ENCODE measurements at regions of chr22 and their contacts with region 1.

Region 1: GRCh38 chr22:17084554-17085276 is at the start of gene IL17RA:
- DNase-seq: peak; percentile 95
- H3K4me3 Mint-ChIP-seq: peak within 1 kb of the TSS; percentile 84
- H3K27ac Mint-ChIP-seq: peak within 1 kb of the TSS; percentile 85
- H3K4me1 Mint-ChIP-seq: peaks cover 42% of the 10 kb centered on the region
- H3K27me3 Mint-ChIP-seq: no peaks in the 10 kb centered on the region
- total RNA-seq, gene IL17RA: 10.2 to 10.7 TPM

Region 2: GRCh38 chr22:17098379-17098819 is 13.7 kb after region 1 on chr22:
- CTCF ChIA-PET with region 1: interaction called, 5 read pairs
- intact Hi-C with region 1: loop called (anchors 2 kb)
- DNase-seq: peak; percentile 60
- H3K4me3 Mint-ChIP-seq: no peak overlapping the region
- H3K27ac Mint-ChIP-seq: no peak overlapping the region
- H3K4me1 Mint-ChIP-seq: peaks cover 86% of the 10 kb centered on the region
- H3K27me3 Mint-ChIP-seq: no peaks in the 10 kb centered on the region

Region 3: DNA sequence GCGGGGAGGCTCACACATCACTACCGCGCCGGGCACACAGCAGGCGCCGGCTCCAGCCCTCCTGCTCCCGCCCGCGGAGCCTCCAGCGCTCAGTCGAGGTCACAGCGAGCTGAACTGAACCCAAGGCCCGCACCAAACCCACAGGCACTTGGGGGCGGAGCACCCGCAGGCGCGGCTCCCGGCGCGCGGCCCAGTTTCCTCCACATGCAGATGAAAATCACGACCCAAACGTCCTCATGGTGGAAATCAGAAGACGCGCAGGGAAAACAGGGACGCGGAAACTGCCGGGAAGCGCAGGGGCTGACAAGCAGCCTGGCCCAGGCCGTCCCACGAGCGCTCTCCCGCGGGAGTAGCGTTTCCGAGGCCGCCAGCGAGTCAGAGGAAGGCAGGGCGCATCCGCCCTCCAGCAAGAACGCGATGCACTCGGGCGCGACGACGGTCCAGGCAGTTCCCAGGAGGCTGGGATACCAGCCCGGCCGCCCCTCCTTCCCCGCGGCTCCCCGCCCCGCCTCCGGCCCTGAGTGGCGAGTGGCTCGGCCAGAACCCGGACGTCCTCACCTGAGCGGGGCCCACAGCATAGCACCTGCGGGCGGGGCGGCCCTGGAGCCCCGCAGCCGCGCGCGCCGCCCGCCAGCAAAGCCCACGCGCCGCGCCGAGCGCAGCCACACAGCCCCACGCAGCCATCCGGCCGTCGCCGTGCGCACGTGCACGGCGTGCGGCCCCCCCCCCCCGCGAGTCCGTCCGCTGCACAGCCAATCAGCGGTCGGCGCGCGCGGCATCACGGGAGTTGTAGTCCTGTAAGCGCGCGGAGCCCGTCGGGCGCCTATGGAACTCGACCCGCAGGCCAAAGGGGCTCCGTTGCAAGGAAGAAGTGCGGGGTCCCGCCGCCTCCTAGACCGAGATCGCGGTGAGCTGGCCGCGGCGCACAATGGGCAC is 74.1 kb after region 1 on chr22 and contains the start of gene HDHD5:
- CTCF ChIA-PET with region 1: interaction called, 4 read pairs
- intact Hi-C with region 1: loop called (anchors 1 kb)
- DNase-seq: peak; percentile 90
- H3K4me3 Mint-ChIP-seq: peak within 1 kb of the TSS; percentile 84
- H3K27ac Mint-ChIP-seq: peak within 1 kb of the TSS; percentile 78
- H3K4me1 Mint-ChIP-seq: peaks cover 38% of the 10 kb centered on the region
- H3K27me3 Mint-ChIP-seq: no peaks in the 10 kb centered on the region
- total RNA-seq, gene HDHD5: 40.1 to 43.7 TPM

Region 4: DNA sequence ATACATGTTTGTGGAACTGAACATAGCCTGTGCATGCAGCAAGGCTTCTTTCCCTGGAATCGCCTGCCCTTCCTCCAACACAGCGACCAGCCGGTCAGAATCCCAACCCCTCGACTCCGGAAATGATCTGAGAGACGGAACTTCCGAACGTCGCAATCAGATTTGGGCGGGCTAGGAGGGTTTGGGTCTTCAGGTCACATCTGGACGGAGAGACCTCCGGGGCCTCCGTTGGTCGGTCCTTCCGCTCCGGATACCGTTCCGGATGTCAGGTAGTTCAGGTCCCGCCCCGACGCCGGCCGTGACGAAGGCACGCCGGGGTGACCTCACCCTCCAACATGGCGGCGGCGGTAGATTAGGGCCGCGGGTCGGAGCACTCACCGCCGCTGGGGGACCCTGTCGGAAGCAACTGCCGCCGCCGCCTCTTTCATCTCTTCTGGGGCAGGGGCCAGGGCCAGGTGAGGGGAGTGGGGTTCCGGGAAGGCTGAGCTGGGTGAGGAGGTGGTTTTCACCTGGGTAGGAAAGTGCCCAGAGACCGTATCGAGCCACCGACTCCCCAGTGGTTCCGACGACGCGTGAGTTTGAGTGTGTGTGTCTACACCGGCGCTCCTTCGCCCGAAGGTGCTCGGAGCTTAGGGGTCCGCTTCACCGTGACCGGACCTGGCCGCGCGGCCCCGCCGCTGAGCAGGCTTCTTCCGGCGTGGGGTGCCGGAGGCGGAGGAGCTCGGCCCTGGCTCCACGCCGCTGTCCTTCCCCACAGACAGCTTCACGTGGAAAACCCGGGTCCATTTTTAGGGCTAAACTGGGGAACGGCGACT is 553.9 kb after region 1 on chr22 and contains the start of gene BCL2L13:
- CTCF ChIA-PET with region 1: no interaction called
- intact Hi-C with region 1: loop called (anchors 1 kb)
- DNase-seq: peak; percentile 94
- H3K4me3 Mint-ChIP-seq: peak within 1 kb of the TSS; percentile 85
- H3K27ac Mint-ChIP-seq: peak within 1 kb of the TSS; percentile 89
- H3K4me1 Mint-ChIP-seq: peaks cover 22% of the 10 kb centered on the region
- H3K27me3 Mint-ChIP-seq: no peaks in the 10 kb centered on the region
- total RNA-seq, gene BCL2L13: 32.2 to 32.6 TPM

Region 5: GRCh38 chr22:18001040-18001893 is 916.6 kb after region 1 on chr22:
- CTCF ChIA-PET with region 1: no interaction called
- intact Hi-C with region 1: loop called (anchors 10 kb)
- DNase-seq: peak; percentile 77
- H3K4me3 Mint-ChIP-seq: peak overlapping the region; percentile 91
- H3K27ac Mint-ChIP-seq: peak overlapping the region; percentile 93
- H3K4me1 Mint-ChIP-seq: peaks cover 43% of the 10 kb centered on the region
- H3K27me3 Mint-ChIP-seq: peaks cover 5% of the 10 kb centered on the region